ENCODE measurements at regions of chr13 and their contacts with region 1.

Region 1: GRCh38 chr13:25971459-25972145 is 80.2 kb downstream of the SHISA2 start:
- DNase-seq: peak; percentile 39 to 81 (median 50)
- H3K4me3 ChIP-seq: no peak overlapping the region
- H3K4me3 Mint-ChIP-seq: peak overlapping the region; percentile 12 to 79 (median 48)
- H3K27ac ChIP-seq: peak overlapping the region; percentile 14
- H3K27ac Mint-ChIP-seq: peak overlapping the region; percentile 61 to 97 (median 85)
- H3K4me1 ChIP-seq: peaks cover 50% of the 10 kb centered on the region
- H3K4me1 Mint-ChIP-seq: peaks cover 43 to 66% (median 53%) of the 10 kb centered on the region in 4 donors
- H3K27me3 ChIP-seq: no peaks in the 10 kb centered on the region
- H3K27me3 Mint-ChIP-seq: no peaks in the 10 kb centered on the region

Region 2: DNA sequence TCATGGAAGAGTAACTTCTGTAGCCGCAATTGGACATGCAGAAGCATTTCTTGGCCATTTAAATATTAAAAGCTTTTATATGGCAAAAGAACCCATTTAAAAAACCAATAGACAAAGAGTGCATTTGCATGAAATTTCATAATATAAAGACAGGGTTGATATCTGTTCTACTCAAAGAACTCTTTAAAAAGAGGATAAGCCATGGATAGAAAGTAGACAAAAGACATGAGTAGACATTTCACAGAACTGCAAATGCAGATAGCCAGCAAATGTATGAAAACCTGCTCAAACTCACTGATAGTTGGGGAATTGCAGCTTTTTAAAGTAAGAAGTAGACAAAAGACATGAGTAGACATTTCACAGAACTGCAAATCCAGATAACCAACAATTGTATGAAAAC is 137.8 kb before region 1 on chr13:
- CTCF ChIA-PET with region 1: no interaction called
- POLR2A ChIA-PET with region 1: no interaction called
- intact Hi-C with region 1: loop called (anchors 5 kb)
- DNase-seq: no peak
- H3K4me3 ChIP-seq: no peak overlapping the region
- H3K4me3 Mint-ChIP-seq: no peak overlapping the region
- H3K27ac ChIP-seq: no peak overlapping the region
- H3K27ac Mint-ChIP-seq: no peak overlapping the region
- H3K4me1 ChIP-seq: no peaks in the 10 kb centered on the region
- H3K4me1 Mint-ChIP-seq: peaks cover 0 to 2% (median under 1%) of the 10 kb centered on the region in 4 donors
- H3K27me3 ChIP-seq: no peaks in the 10 kb centered on the region
- H3K27me3 Mint-ChIP-seq: peaks cover 0 to 2% of the 10 kb centered on the region in 2 donors

Region 3: GRCh38 chr13:25847145-25847544 is 124.5 kb before region 1 on chr13:
- CTCF ChIA-PET with region 1: no interaction called
- POLR2A ChIA-PET with region 1: interaction called, 5 read pairs
- intact Hi-C with region 1: loop called (anchors 5 kb)
- DNase-seq: peak; percentile 45 to 71 (median 55)
- H3K4me3 ChIP-seq: peak overlapping the region; percentile 17 to 32
- H3K4me3 Mint-ChIP-seq: peak overlapping the region; percentile 49 to 85 (median 72)
- H3K27ac ChIP-seq: peak overlapping the region; percentile 28
- H3K27ac Mint-ChIP-seq: peak overlapping the region; percentile 74 to 91 (median 89)
- H3K4me1 ChIP-seq: peaks cover 26% of the 10 kb centered on the region
- H3K4me1 Mint-ChIP-seq: peaks cover 21 to 46% (median 32%) of the 10 kb centered on the region in 4 donors
- H3K27me3 ChIP-seq: no peaks in the 10 kb centered on the region
- H3K27me3 Mint-ChIP-seq: peaks cover 0 to 3% of the 10 kb centered on the region in 2 donors

Region 4: GRCh38 chr13:25948910-25949309 is 22.7 kb before region 1 on chr13:
- CTCF ChIA-PET with region 1: interaction called, 3 read pairs
- POLR2A ChIA-PET with region 1: interaction called, 13 read pairs
- intact Hi-C with region 1: no loop called
- DNase-seq: no peak
- H3K4me3 ChIP-seq: no peak overlapping the region
- H3K4me3 Mint-ChIP-seq: no peak overlapping the region
- H3K27ac ChIP-seq: no peak overlapping the region
- H3K27ac Mint-ChIP-seq: no peak overlapping the region
- H3K4me1 ChIP-seq: peaks cover 5% of the 10 kb centered on the region
- H3K4me1 Mint-ChIP-seq: peaks cover 0 to 16% (median 7%) of the 10 kb centered on the region in 4 donors
- H3K27me3 ChIP-seq: no peaks in the 10 kb centered on the region
- H3K27me3 Mint-ChIP-seq: no peaks in the 10 kb centered on the region

Region 5: DNA sequence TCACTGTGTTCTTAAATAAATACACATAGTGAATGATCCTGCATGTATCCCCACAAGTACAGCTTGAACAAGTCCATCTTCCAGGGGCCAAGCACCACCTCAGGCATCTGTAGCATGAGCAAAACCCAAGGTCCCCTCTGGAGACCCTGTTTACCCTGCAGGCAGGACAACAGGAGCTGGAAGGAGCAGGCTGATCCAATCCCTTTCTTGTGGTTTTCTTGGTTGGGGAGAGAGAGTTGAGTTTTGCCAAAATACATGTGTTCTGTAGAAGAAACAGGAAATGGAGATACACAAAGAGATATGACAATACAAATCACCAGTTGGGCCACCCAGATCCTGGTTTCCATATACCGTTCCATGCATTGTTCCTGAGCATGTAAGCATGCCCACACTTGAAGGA is 12.6 kb before region 1 on chr13:
- CTCF ChIA-PET with region 1: interaction called, 4 read pairs
- POLR2A ChIA-PET with region 1: interaction called, 19 read pairs
- intact Hi-C with region 1: no loop called
- DNase-seq: peak in 2 of 5 donors; percentile 14 to 15
- H3K4me3 ChIP-seq: no peak overlapping the region
- H3K4me3 Mint-ChIP-seq: peak overlapping the region in 7 of 8 donors; percentile 14 to 67 (median 52)
- H3K27ac ChIP-seq: no peak overlapping the region
- H3K27ac Mint-ChIP-seq: peak overlapping the region in 4 of 7 donors; percentile 3 to 80 (median 12)
- H3K4me1 ChIP-seq: peaks cover 27% of the 10 kb centered on the region
- H3K4me1 Mint-ChIP-seq: peaks cover 21 to 52% (median 31%) of the 10 kb centered on the region in 4 donors
- H3K27me3 ChIP-seq: no peaks in the 10 kb centered on the region
- H3K27me3 Mint-ChIP-seq: no peaks in the 10 kb centered on the region

Region 6: DNA sequence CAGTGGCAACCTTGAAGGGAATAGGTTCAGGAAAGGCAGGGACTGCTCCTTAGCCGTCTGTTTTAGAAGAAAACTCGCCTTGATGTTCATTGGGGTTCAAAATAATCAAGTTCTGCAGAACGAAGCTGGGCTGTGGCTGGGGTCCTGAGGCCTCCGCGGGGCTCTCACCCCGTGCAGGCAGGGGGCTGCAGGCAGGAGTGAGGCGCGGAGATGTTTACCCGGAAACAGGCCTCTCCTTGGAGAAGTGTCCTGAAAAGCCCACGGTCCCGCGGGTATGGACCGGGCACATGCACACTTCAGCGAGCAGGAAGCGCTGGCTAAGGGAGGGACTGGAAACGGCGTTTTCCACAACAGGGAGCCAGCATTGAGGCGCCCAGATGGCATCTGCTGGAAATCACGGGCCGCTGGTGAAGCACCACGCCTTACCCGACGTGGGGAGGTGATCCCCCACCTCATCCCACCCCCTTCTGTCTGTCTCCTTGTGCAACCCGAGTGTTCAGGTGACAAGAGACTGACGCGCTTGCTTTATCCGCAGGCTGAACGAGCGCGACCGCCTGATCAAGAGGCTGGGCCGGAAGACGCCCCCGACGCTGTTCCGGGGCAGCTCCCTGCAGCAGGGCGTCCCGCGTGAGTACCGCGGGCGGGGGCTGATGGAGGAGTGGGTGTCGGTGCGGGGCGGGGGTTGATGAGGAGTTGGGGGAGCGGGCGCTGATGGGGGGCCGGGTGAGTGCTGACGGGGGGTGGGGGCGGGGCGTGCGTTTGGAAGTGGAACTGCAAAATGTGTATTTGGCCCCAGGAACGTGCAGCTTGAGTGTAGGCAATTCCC is 40.6 kb after region 1 on chr13:
- CTCF ChIA-PET with region 1: interaction called, 3 read pairs
- POLR2A ChIA-PET with region 1: interaction called, 5 read pairs
- intact Hi-C with region 1: loop called (anchors 2 kb)
- DNase-seq: peak; percentile 55 to 81 (median 66)
- H3K4me3 ChIP-seq: peak overlapping the region; percentile 29 to 64
- H3K4me3 Mint-ChIP-seq: peak overlapping the region; percentile 79 to 91 (median 84)
- H3K27ac ChIP-seq: peak overlapping the region; percentile 64
- H3K27ac Mint-ChIP-seq: peak overlapping the region; percentile 57 to 86 (median 80)
- H3K4me1 ChIP-seq: peaks cover 4% of the 10 kb centered on the region
- H3K4me1 Mint-ChIP-seq: peaks cover 0 to 21% (median 7%) of the 10 kb centered on the region in 4 donors
- H3K27me3 ChIP-seq: no peaks in the 10 kb centered on the region
- H3K27me3 Mint-ChIP-seq: peaks cover 0 to 3% of the 10 kb centered on the region in 2 donors

Region 7: DNA sequence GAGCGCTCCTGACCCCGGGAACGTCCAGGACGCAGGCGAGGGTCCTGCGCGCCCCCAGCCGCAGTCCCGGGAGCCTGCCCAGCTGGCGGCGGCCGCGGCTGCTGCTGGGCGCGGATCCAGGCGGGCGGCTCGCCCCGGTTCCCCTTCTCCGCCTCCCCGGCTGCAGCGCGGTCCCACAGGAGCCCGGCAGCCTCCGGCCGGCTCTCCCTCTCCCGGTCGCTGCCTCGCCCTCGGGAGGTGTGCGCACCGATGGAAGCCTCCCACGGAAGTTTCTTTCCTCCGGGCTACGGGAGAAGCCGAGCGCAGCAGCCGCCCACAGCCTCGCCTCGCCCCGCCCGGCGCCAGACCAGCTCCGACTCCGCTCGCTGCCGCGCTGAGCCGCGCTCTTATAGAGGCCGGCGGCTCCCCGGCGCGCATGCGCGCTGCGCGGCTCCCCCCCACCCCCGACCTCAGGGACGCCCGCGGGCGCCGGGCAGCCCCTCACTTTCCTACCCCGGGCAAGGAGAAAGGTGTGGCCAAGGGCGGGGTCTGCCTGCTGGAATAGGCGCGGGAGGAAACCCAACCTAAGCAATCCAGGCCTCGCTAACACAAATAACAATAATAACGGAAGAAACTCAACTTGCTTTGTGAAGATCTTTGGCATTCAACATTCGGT is 80.2 kb after region 1 on chr13 and contains the start of gene SHISA2:
- CTCF ChIA-PET with region 1: no interaction called
- POLR2A ChIA-PET with region 1: interaction called, 3 read pairs
- intact Hi-C with region 1: loop called (anchors 2 kb)
- DNase-seq: peak in 2 of 5 donors; percentile 26 to 41
- H3K4me3 ChIP-seq: peak within 1 kb of the TSS; percentile 11 to 28
- H3K4me3 Mint-ChIP-seq: peak within 1 kb of the TSS; percentile 67 to 85 (median 80)
- H3K27ac ChIP-seq: no peak within 1 kb of the TSS
- H3K27ac Mint-ChIP-seq: peak within 1 kb of the TSS in 2 of 7 donors; percentile 14 to 34
- H3K4me1 ChIP-seq: peaks cover 16% of the 10 kb centered on the region
- H3K4me1 Mint-ChIP-seq: peaks cover 7 to 27% (median 19%) of the 10 kb centered on the region in 4 donors
- H3K27me3 ChIP-seq: peaks cover 20% of the 10 kb centered on the region
- H3K27me3 Mint-ChIP-seq: peaks cover 19 to 22% of the 10 kb centered on the region in 2 donors
- total RNA-seq, gene SHISA2: 0.36 to 0.58 TPM

Measured in CD4-positive, alpha-beta memory T cell (primary cell).